Mucosa of descending colon (tissue), 3 donors: ENCODE measurements at regions of chr4 and their contacts with region 1.

Region 1: GRCh38 chr4:2761035-2761923 is 5.1 kb upstream of the TNIP2 start:
- DNase-seq: peak; percentile 87 to 92 (median 88)
- ATAC-seq: peak; percentile 85
- H3K4me3 ChIP-seq: no peak overlapping the region
- H3K4me1 ChIP-seq: peaks cover 30% of the 10 kb centered on the region
- CTCF ChIP-seq: no peak

Region 2: GRCh38 chr4:1899149-1900086 is 861.9 kb before region 1 on chr4:
- intact Hi-C with region 1: no loop called
- DNase-seq: peak; percentile 68 to 82 (median 74)
- ATAC-seq: peak; percentile 95
- H3K4me3 ChIP-seq: no peak overlapping the region
- H3K4me1 ChIP-seq: peaks cover 4% of the 10 kb centered on the region
- CTCF ChIP-seq: peak; percentile 52

Region 3: GRCh38 chr4:2811830-2812611 is 50.7 kb after region 1 on chr4:
- intact Hi-C with region 1: loop called in 1 of 2 experiments (anchors 10 kb)
- DNase-seq: peak; percentile 66 to 93 (median 75)
- ATAC-seq: peak; percentile 76
- H3K4me3 ChIP-seq: no peak overlapping the region
- H3K4me1 ChIP-seq: peaks cover 24% of the 10 kb centered on the region
- CTCF ChIP-seq: no peak

Region 4: DNA sequence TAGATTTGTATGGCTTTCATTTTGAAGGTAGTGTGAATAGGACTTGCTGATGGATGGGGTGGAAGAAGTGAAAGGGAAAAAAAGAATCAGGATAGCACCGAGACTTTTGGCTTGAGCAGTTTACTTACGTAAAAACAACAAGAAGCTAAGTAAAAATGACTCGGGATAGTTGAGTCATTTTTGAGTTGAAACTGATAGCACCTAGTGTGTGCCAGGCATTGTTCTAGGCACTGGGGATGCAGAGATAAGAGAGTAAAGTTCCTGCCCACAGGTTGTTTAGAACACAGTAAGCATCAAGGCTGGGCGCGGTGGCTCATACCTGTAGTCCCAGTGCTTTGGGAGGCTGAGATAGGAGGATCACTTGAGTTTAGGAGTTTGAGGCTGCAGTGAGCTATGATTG is 117.1 kb after region 1 on chr4:
- intact Hi-C with region 1: no loop called
- DNase-seq: no peak
- ATAC-seq: no peak
- H3K4me3 ChIP-seq: no peak overlapping the region
- H3K4me1 ChIP-seq: peaks cover 19% of the 10 kb centered on the region
- CTCF ChIP-seq: no peak

Region 5: DNA sequence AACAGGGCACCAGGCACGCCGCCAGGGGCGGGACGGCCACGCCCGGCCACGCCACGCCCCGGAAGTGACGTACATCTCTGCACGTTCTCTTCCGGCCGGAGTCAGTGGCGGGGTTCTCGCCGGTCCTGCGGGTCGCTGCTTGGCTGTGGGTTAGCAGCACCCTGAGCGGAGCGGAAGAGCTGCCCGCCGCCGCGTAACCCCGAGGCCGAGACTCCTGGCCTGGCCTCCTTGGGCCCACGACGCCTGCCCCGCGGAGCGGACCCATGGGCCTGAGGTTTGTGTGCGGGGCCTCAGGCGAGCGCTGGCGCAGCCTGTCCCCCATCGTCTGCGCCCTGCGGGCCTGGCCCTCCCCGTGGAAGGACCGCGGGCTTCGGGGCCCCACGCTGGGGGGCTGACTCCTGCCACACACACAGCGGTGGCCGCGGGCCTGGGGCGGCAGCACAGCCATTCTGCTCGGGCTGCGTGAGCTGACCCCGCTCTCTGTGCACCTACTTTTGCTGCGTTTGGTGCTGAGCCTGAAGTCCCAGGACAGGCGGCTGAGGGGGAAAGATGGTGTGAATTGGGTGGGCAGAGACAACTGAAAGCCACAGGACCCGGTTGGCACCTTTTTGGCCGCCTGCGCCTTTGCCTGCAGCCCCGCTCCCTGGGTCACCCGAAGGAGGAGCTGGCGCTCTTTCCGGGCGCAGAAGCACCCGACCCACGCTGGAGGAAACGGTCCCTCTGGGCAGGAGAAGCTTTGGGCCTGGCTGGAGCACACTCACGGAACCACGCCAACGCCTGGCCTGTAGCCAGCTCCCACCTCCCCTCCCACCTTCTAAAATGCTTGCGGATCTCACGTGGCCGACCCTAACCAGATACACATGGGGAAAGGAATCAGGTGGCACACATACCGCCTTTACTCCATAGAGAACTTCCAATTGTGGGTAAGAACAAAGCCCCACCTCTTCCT is 173.8 kb after region 1 on chr4:
- intact Hi-C with region 1: loop called (anchors 10 kb)
- DNase-seq: peak; percentile 97 to 99 (median 98)
- ATAC-seq: peak; percentile 86
- H3K4me3 ChIP-seq: peak overlapping the region; percentile 75
- H3K4me1 ChIP-seq: peaks cover 34% of the 10 kb centered on the region
- CTCF ChIP-seq: no peak

Region 6: GRCh38 chr4:2948895-2949765 is 187.9 kb after region 1 on chr4:
- intact Hi-C with region 1: loop called in 1 of 2 experiments (anchors 10 kb)
- DNase-seq: peak in 2 of 3 donors; percentile 22 to 61
- ATAC-seq: peak; percentile 73
- H3K4me3 ChIP-seq: no peak overlapping the region
- H3K4me1 ChIP-seq: no peaks in the 10 kb centered on the region
- CTCF ChIP-seq: peak; percentile 35